ENCODE measurements at regions of chr18 and their contacts with region 1.

Region 1: DNA sequence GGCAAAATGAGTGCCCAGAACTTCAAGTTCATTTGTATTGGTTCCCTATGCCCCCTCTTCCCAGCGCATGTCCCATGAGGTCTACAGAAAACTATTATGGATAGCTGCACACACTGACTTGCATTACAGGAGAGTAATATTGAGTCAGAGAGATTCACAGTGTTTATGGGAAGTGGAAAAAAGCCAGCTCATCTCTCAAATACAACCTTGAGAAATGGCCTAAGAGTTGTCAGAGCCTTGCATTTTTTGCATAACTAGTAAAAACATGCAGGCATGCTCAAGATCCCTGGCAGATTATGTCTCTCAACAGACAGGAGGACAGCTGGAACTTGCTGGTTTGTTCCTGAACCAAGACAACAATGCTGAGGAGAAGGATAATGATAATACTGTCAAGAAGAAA is 1292.8 kb downstream of the DSC3 start:
- DNase-seq: no peak
- ATAC-seq: no peak
- H3K4me3 ChIP-seq: no peak overlapping the region
- H3K27ac ChIP-seq: no peak overlapping the region
- H3K4me1 ChIP-seq: no peaks in the 10 kb centered on the region
- H3K27me3 ChIP-seq: no peaks in the 10 kb centered on the region
- CTCF ChIP-seq: no peak
- POLR2A ChIP-seq: no peak

Region 2: GRCh38 chr18:29664278-29665036 is 85.2 kb before region 1 on chr18:
- in situ Hi-C with region 1: no loop called
- intact Hi-C with region 1: no loop called
- DNase-seq: no peak
- ATAC-seq: no peak
- H3K4me3 ChIP-seq: no peak overlapping the region
- H3K27ac ChIP-seq: no peak overlapping the region
- H3K4me1 ChIP-seq: peaks cover 0 to 19% of the 10 kb centered on the region in 2 donors
- H3K27me3 ChIP-seq: no peaks in the 10 kb centered on the region
- CTCF ChIP-seq: no peak
- POLR2A ChIP-seq: no peak

Region 3: DNA sequence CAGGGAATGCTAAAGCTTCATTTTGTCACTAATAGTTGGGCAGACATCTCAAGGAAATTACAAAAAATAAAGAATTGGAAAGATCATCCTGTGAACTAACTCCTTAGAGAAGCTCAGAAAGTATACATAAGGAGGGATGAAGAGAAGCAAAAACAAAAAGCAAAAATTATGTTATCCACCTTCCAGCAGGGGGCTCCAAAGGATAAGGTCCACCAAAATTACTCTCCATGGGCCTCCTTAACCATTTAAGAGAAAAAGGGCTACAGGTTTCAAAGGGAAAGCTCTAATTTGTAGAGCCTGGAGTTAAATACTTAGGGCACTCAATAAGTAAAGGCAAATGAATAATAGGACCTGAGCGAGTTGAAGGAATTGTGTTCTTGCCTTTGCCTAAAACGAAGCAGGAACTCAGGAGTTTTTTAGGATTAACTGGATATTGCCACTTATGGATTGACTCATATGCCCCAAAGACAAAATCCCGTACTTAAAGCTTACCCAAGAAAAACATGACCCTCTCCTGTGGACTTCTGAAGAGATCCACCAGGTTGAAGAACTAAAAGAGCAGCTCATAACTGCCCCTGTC is 124.9 kb after region 1 on chr18:
- in situ Hi-C with region 1: loop called in 1 of 4 experiments (anchors 25 kb)
- intact Hi-C with region 1: no loop called
- DNase-seq: no peak
- ATAC-seq: no peak
- H3K4me3 ChIP-seq: no peak overlapping the region
- H3K27ac ChIP-seq: no peak overlapping the region
- H3K4me1 ChIP-seq: no peaks in the 10 kb centered on the region
- H3K27me3 ChIP-seq: no peaks in the 10 kb centered on the region
- CTCF ChIP-seq: no peak
- POLR2A ChIP-seq: no peak

Measured in gastrocnemius medialis (tissue), 4 donors.